Heart right ventricle (tissue), 16 donors: ENCODE measurements at regions of chr3 and their contacts with region 1.

Region 1: GRCh38 chr3:153026026-153026425 is 136.0 kb upstream of the RAP2B start:
- DNase-seq: no peak
- ATAC-seq: no peak
- H3K4me3 ChIP-seq: no peak overlapping the region
- H3K27ac ChIP-seq: no peak overlapping the region
- H3K4me1 ChIP-seq: peaks cover 0 to 19% (median 10%) of the 10 kb centered on the region in 9 donors
- H3K27me3 ChIP-seq: peaks cover 0 to 5% (median 0%) of the 10 kb centered on the region in 7 donors
- CTCF ChIP-seq: peak; percentile 40 to 79 (median 68)

Region 2: GRCh38 chr3:153595186-153595815 is 569.3 kb after region 1 on chr3:
- intact Hi-C with region 1: loop called in 1 of 10 experiments (anchors 5 kb)
- DNase-seq: no peak
- ATAC-seq: peak in 4 of 8 donors; percentile 52 to 60 (median 58)
- H3K4me3 ChIP-seq: no peak overlapping the region
- H3K27ac ChIP-seq: no peak overlapping the region
- H3K4me1 ChIP-seq: peaks cover 0 to 12% (median 7%) of the 10 kb centered on the region in 9 donors
- H3K27me3 ChIP-seq: no peaks in the 10 kb centered on the region
- CTCF ChIP-seq: peak; percentile 16 to 71 (median 60)

Region 3: DNA sequence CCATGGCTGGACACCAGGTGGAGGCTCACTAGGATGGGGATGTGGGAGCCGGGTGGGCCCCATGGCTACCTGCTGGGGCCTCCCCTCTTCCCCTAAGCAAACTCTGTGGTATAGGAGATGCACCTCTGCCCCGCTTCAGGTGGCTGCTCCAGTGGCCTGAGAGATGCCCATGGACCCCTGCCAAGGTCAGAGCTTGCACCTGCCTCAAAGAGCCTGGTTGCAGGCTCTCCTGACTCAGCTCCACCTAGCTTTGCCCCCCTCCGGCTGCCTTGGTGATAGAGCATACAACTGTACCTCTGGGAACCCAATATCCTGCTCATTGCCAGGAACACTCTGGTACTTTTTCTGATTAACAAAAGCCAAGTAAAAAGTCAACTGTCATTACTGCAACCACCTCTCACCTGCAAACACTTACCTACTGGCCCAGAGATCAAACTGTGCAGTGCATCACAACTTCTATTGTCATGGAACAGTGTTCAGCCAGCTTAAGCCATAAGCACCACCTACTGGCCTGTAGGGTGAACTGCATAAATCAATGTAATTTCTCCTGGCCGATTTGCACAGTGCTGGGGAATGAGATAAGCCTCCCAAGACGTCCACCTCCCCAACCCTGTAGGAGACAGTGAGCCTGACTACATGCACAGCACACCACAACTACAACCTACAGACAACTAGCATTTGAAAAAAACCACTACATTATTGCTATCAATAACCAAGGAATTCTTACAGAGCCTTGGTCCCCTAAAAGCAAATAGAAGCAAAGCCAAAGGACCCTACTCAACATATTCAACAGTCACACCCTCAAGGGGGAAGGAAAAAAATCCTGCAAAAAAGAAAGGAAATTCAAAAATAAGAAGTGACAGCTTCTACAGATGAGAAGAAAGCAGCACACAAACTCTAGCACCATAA is 742.8 kb after region 1 on chr3:
- intact Hi-C with region 1: loop called in 4 of 10 experiments (anchors 5 kb)
- DNase-seq: peak in 1 of 2 donors; percentile 22
- ATAC-seq: peak; percentile 57 to 89 (median 81)
- H3K4me3 ChIP-seq: no peak overlapping the region
- H3K27ac ChIP-seq: no peak overlapping the region
- H3K4me1 ChIP-seq: no peaks in the 10 kb centered on the region
- H3K27me3 ChIP-seq: no peaks in the 10 kb centered on the region
- CTCF ChIP-seq: peak; percentile 66 to 85 (median 79)